Mammary epithelial cell (primary cell): ENCODE measurements at regions of chr7 and their contacts with region 1.

Region 1: DNA sequence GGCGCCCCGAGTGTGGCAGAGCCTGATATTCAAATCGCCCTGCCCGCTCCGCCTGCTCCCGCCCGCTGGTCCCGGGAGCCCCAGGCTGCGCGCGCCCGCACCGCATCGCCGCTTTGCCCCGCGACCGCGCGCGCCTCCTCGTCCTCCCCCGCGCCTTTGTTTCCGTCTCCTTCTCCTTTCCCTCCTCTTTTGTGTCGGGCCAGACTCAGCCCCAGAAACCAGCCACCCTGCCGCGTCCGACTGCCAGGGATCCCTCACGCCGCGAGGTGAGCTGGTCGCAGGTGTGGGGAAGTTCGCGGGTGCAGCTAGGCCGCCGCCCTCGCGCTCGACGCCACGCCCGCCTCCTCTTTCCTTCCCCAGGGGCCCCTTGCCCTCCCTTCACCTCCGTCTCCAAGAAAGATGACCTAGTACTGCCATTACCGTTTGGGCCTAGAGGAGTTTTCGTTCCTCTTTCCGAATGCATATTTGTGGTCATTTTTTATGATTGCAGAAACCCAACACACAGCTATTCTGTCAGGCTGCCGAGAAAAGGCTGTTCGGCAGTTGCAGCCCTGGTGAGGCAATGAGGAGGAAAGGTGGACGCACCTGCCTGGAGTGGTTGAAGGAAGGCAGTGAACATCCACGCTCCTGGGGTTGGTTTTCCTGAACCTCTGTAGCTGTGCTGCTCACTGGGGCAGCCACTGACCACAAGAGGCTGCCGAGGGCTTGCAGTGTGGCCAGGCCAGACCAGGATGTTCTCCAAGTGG is 107.3 kb downstream of the SNX10 start:
- DNase-seq: peak; percentile 64
- H3K4me3 ChIP-seq: peak overlapping the region; percentile 43 to 71 (median 59)
- H3K27ac ChIP-seq: peak overlapping the region; percentile 16
- H3K4me1 ChIP-seq: peaks cover 14% of the 10 kb centered on the region
- H3K27me3 ChIP-seq: no peaks in the 10 kb centered on the region
- CTCF ChIP-seq: no peak

Region 2: GRCh38 chr7:26265065-26265464 is 133.9 kb before region 1 on chr7:
- CTCF ChIA-PET with region 1: no interaction called
- dilution Hi-C with region 1: no loop called
- in situ Hi-C with region 1: no loop called
- intact Hi-C with region 1: no loop called
- DNase-seq: peak; percentile 17
- H3K4me3 ChIP-seq: no peak overlapping the region
- H3K27ac ChIP-seq: no peak overlapping the region
- H3K4me1 ChIP-seq: no peaks in the 10 kb centered on the region
- H3K27me3 ChIP-seq: no peaks in the 10 kb centered on the region
- CTCF ChIP-seq: no peak

Region 3: DNA sequence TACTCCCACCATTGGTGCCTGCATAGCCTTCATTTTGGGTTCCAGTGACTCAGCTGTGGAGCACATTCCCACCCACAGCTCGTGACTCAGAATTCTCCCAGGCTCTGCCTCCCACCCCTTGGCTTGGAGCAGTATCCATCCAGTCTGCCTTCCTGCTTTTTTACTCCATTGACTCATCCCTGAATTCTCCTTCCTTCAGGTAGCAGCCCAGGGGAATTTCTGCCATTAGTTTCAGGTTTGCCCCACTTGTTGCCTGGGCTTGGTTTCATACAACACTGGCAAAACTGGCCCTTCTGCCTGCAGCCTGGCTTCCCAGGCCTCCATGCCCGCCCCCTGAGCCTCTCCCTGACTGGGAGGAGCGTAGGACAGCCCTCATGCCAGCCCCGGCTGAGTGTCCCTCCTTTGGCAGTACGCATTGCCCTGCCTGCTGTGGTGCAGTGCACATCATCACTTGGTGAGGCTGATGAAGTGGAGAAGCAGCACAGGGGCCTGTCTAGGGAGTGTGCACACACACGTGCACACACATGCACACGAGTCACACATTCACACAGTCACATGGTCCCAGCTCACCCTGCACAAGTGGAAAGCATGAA is 52.2 kb before region 1 on chr7:
- CTCF ChIA-PET with region 1: no interaction called
- dilution Hi-C with region 1: loop called (anchors 10 kb)
- in situ Hi-C with region 1: no loop called
- intact Hi-C with region 1: no loop called
- DNase-seq: peak; percentile 94
- H3K4me3 ChIP-seq: no peak overlapping the region
- H3K27ac ChIP-seq: peak overlapping the region; percentile 54
- H3K4me1 ChIP-seq: peaks cover 7% of the 10 kb centered on the region
- H3K27me3 ChIP-seq: no peaks in the 10 kb centered on the region
- CTCF ChIP-seq: no peak

Region 4: GRCh38 chr7:26686448-26686981 is 287.6 kb after region 1 on chr7:
- CTCF ChIA-PET with region 1: no interaction called
- dilution Hi-C with region 1: no loop called
- in situ Hi-C with region 1: no loop called
- intact Hi-C with region 1: no loop called
- DNase-seq: peak; percentile 31
- H3K4me3 ChIP-seq: no peak overlapping the region
- H3K27ac ChIP-seq: peak overlapping the region; percentile 4
- H3K4me1 ChIP-seq: peaks cover 19% of the 10 kb centered on the region
- H3K27me3 ChIP-seq: no peaks in the 10 kb centered on the region
- CTCF ChIP-seq: peak; percentile 48 to 53